CD8-positive, alpha-beta memory T cell (primary cell): ENCODE measurements at regions of chr7 and their contacts with region 1.

Region 1: DNA sequence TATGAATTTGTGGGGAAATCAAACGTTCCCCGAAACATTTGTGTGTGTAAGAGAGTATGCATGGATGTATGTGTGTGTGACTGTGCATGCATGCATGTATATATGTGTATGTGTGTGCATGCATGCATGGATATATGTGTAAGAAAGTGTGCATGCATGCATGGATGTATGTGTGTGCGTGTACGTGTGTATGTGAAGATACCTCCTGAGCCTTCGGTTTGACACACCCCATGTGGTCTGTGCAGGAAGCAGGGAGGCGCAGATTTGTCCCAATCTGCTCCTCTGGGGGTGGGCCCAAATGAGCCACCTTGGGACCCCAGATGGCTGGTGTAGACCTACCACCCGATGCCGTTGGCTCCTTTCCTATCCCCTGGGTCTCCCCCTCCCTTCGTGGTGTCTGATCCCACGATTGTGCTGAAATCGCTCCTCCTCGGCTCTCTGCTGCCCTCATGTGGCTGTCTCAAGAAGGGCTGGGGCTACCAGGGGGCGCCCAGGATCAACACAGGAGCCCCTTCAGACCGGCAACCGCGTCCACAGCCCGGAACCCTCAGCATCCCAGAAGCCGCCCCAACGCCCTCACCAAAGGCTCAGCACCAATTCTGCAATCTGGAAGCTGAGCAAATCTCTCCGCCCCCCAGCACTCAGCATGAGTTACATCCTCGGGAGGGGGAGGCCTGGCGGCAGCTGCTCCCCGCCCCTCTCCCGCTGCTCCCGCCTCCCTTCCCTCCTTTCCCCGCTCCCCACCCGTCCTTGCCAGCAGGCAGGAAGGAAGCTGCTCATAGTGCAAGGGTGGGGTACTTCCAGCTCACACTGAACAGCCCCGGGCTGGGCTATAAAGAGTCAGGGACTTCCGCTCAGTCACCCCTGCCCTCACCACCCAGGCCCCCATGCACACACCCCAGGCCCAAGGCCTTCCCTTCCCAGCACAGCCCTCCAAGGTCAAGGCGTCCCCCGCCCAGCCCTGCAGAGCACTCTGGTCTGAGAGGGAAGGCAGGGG is 2.3 kb upstream of the NOS3 start:
- DNase-seq: peak; percentile 54 to 75 (median 62)
- H3K4me3 ChIP-seq: peak overlapping the region; percentile 38
- H3K4me3 Mint-ChIP-seq: peak overlapping the region in 5 of 7 donors; percentile 15 to 65 (median 54)
- H3K27ac ChIP-seq: no peak overlapping the region
- H3K27ac Mint-ChIP-seq: peak overlapping the region in 2 of 8 donors; percentile 29 to 64
- H3K4me1 ChIP-seq: peaks cover 17% of the 10 kb centered on the region
- H3K4me1 Mint-ChIP-seq: peaks cover 12 to 24% (median 15%) of the 10 kb centered on the region in 3 donors
- H3K27me3 ChIP-seq: no peaks in the 10 kb centered on the region
- H3K27me3 Mint-ChIP-seq: peaks cover 18 to 31% of the 10 kb centered on the region in 2 donors

Region 2: GRCh38 chr7:150974468-150975391 is 13.8 kb before region 1 on chr7:
- CTCF ChIA-PET with region 1: interaction called, 14 read pairs
- POLR2A ChIA-PET with region 1: interaction called, 7 read pairs
- DNase-seq: peak; percentile 69 to 86 (median 78)
- H3K4me3 ChIP-seq: peak overlapping the region; percentile 78
- H3K4me3 Mint-ChIP-seq: peak overlapping the region; percentile 86 to 90 (median 88)
- H3K27ac ChIP-seq: peak overlapping the region; percentile 64
- H3K27ac Mint-ChIP-seq: peak overlapping the region; percentile 58 to 96 (median 87)
- H3K4me1 ChIP-seq: peaks cover 45% of the 10 kb centered on the region
- H3K4me1 Mint-ChIP-seq: peaks cover 32 to 46% (median 35%) of the 10 kb centered on the region in 3 donors
- H3K27me3 ChIP-seq: peaks cover 21% of the 10 kb centered on the region
- H3K27me3 Mint-ChIP-seq: peaks cover 24 to 25% of the 10 kb centered on the region in 2 donors

Region 3: GRCh38 chr7:151008511-151009323 is 20.2 kb after region 1 on chr7:
- CTCF ChIA-PET with region 1: interaction called, 31 read pairs
- POLR2A ChIA-PET with region 1: interaction called, 3 read pairs
- DNase-seq: peak; percentile 70 to 85 (median 79)
- H3K4me3 ChIP-seq: peak overlapping the region; percentile 44
- H3K4me3 Mint-ChIP-seq: peak overlapping the region; percentile 75 to 93 (median 83)
- H3K27ac ChIP-seq: peak overlapping the region; percentile 66
- H3K27ac Mint-ChIP-seq: peak overlapping the region; percentile 70 to 97 (median 93)
- H3K4me1 ChIP-seq: peaks cover 65% of the 10 kb centered on the region
- H3K4me1 Mint-ChIP-seq: peaks cover 48 to 65% (median 55%) of the 10 kb centered on the region in 3 donors
- H3K27me3 ChIP-seq: no peaks in the 10 kb centered on the region
- H3K27me3 Mint-ChIP-seq: peaks cover 0 to 6% of the 10 kb centered on the region in 2 donors

Region 4: GRCh38 chr7:151017953-151018420 is 29.5 kb after region 1 on chr7:
- CTCF ChIA-PET with region 1: interaction called, 31 read pairs
- POLR2A ChIA-PET with region 1: interaction called, 6 read pairs
- DNase-seq: peak; percentile 72 to 86 (median 73)
- H3K4me3 ChIP-seq: peak overlapping the region; percentile 67
- H3K4me3 Mint-ChIP-seq: peak overlapping the region; percentile 80 to 93 (median 85)
- H3K27ac ChIP-seq: no peak overlapping the region
- H3K27ac Mint-ChIP-seq: peak overlapping the region; percentile 66 to 96 (median 90)
- H3K4me1 ChIP-seq: peaks cover 58% of the 10 kb centered on the region
- H3K4me1 Mint-ChIP-seq: peaks cover 39 to 61% (median 46%) of the 10 kb centered on the region in 3 donors
- H3K27me3 ChIP-seq: no peaks in the 10 kb centered on the region
- H3K27me3 Mint-ChIP-seq: peaks cover 15 to 22% of the 10 kb centered on the region in 2 donors